ENCODE measurements at regions of chr12 and their contacts with region 1.

Region 1: DNA sequence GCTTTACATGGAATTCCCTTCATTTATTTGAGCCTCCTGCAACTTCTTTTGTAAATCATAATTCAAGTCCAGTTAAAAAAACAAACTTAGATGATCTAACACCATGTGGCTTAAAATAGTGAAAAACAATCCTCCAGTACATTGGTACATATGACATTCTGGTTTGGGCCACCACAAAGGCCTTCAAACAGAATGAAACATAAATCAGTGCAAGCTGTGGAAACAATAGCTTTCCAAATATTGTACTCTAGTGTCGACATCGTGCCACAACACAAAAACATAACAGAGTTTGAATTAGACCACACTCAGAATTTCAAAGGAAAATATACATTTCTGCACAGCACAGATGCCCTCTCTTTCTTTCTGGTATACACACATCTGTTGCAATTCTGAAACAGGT is 751.3 kb downstream of the SLC6A15 start:
- DNase-seq: no peak
- H3K4me3 ChIP-seq: no peak overlapping the region
- H3K27ac ChIP-seq: no peak overlapping the region
- H3K4me1 ChIP-seq: no peaks in the 10 kb centered on the region
- H3K27me3 ChIP-seq: no peaks in the 10 kb centered on the region
- CTCF ChIP-seq: no peak
- EP300 ChIP-seq: no peak
- POLR2A ChIP-seq: no peak

Region 2: GRCh38 chr12:84124211-84124610 is 37.1 kb before region 1 on chr12:
- intact Hi-C with region 1: loop called in 1 of 4 experiments (anchors 2 kb)
- DNase-seq: no peak
- H3K4me3 ChIP-seq: no peak overlapping the region
- H3K27ac ChIP-seq: no peak overlapping the region
- H3K4me1 ChIP-seq: no peaks in the 10 kb centered on the region
- H3K27me3 ChIP-seq: no peaks in the 10 kb centered on the region
- CTCF ChIP-seq: no peak
- EP300 ChIP-seq: no peak
- POLR2A ChIP-seq: no peak